Mammary epithelial cell (primary cell): ENCODE measurements at regions of chr18 and their contacts with region 1.

Region 1: GRCh38 chr18:7872569-7872968 is 305.5 kb downstream of the PTPRM start:
- DNase-seq: peak; percentile 67
- H3K4me3 ChIP-seq: no peak overlapping the region
- H3K27ac ChIP-seq: peak overlapping the region; percentile 91
- H3K4me1 ChIP-seq: peaks cover 26% of the 10 kb centered on the region
- H3K27me3 ChIP-seq: no peaks in the 10 kb centered on the region
- CTCF ChIP-seq: peak; percentile 31 to 60

Region 2: GRCh38 chr18:7822435-7823367 is 49.9 kb before region 1 on chr18:
- CTCF ChIA-PET with region 1: no interaction called
- dilution Hi-C with region 1: no loop called
- in situ Hi-C with region 1: no loop called
- intact Hi-C with region 1: no loop called
- DNase-seq: no peak
- H3K4me3 ChIP-seq: no peak overlapping the region
- H3K27ac ChIP-seq: no peak overlapping the region
- H3K4me1 ChIP-seq: no peaks in the 10 kb centered on the region
- H3K27me3 ChIP-seq: no peaks in the 10 kb centered on the region
- CTCF ChIP-seq: no peak

Region 3: GRCh38 chr18:7856733-7857132 is 15.8 kb before region 1 on chr18:
- CTCF ChIA-PET with region 1: no interaction called
- dilution Hi-C with region 1: no loop called
- in situ Hi-C with region 1: no loop called
- intact Hi-C with region 1: loop called (anchors 2 kb)
- DNase-seq: peak; percentile 74
- H3K4me3 ChIP-seq: no peak overlapping the region
- H3K27ac ChIP-seq: peak overlapping the region; percentile 43
- H3K4me1 ChIP-seq: peaks cover 22% of the 10 kb centered on the region
- H3K27me3 ChIP-seq: no peaks in the 10 kb centered on the region
- CTCF ChIP-seq: no peak

Region 4: DNA sequence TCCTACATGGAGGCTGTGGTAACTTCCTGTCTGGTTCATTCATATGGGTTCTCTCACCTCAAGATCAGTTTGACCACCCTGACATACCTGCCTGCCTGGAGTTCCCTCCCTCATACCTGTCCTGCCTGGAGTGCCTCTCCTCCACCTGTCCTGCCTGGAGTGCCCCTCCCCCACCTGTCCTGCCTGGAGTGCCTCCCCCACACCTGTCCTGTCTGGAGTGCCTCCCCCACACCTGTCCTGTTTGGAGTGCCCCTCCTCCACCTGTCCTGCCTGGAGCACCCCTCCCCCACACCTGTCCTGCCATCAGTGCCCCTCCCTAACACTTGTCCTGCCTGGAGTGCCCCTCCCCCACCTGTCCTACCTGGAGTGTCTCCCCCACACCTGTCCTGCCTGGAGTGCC is 156.5 kb after region 1 on chr18:
- CTCF ChIA-PET with region 1: no interaction called
- dilution Hi-C with region 1: no loop called
- in situ Hi-C with region 1: no loop called
- intact Hi-C with region 1: no loop called
- DNase-seq: no peak
- H3K4me3 ChIP-seq: no peak overlapping the region
- H3K27ac ChIP-seq: no peak overlapping the region
- H3K4me1 ChIP-seq: no peaks in the 10 kb centered on the region
- H3K27me3 ChIP-seq: no peaks in the 10 kb centered on the region
- CTCF ChIP-seq: no peak